KBM-7 (cell line): ENCODE measurements at regions of chr2 and their contacts with region 1.

Region 1: DNA sequence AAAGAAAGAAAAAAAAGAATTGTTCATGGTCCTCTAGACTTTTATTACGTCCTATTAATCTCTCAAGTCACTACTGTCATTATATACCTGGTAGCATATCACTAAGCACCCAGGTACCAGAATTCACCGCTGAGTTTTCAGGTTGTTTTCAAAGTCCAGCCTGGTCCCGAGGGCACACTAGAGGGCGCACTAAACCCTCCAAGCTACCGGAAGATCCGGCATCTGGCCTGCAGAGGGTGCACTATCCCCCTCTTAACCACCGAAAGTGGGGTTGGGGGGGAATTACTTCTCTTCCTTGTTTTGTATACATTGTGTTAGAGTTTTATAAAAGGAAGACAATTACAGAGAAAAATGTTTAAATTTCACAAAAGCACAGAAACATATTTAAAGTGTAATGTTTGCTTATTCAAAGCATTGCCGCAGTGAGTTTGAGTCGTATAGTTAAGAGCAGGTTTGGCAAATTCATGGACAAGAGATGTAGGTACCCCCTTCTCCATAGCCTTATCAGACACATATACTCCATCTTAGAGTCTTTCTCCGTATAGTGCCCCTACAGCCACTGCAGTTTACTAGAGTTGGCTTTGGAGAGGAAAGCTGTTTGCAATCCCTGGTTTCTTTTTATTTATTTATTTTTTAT is 19.2 kb downstream of the MOGAT1 start:
- DNase-seq: peak; percentile 81

Region 2: GRCh38 chr2:222903234-222904220 is 212.8 kb after region 1 on chr2:
- in situ Hi-C with region 1: loop called (anchors 25 kb)
- DNase-seq: peak; percentile 46